CD8-positive, alpha-beta T cell (primary cell): ENCODE measurements at regions of chr21 and their contacts with region 1.

Region 1: GRCh38 chr21:38092051-38092450 is 164.7 kb upstream of the KCNJ15 start:
- DNase-seq: no peak
- ATAC-seq: no peak
- H3K4me3 ChIP-seq: no peak overlapping the region
- H3K4me3 Mint-ChIP-seq: no peak overlapping the region
- H3K27ac ChIP-seq: no peak overlapping the region
- H3K27ac Mint-ChIP-seq: no peak overlapping the region
- H3K4me1 ChIP-seq: no peaks in the 10 kb centered on the region
- H3K4me1 Mint-ChIP-seq: no peaks in the 10 kb centered on the region
- H3K27me3 ChIP-seq: peaks cover 0 to 4% of the 10 kb centered on the region in 2 experiments
- H3K27me3 Mint-ChIP-seq: peaks cover 10% of the 10 kb centered on the region
- CTCF ChIP-seq: no peak

Region 2: DNA sequence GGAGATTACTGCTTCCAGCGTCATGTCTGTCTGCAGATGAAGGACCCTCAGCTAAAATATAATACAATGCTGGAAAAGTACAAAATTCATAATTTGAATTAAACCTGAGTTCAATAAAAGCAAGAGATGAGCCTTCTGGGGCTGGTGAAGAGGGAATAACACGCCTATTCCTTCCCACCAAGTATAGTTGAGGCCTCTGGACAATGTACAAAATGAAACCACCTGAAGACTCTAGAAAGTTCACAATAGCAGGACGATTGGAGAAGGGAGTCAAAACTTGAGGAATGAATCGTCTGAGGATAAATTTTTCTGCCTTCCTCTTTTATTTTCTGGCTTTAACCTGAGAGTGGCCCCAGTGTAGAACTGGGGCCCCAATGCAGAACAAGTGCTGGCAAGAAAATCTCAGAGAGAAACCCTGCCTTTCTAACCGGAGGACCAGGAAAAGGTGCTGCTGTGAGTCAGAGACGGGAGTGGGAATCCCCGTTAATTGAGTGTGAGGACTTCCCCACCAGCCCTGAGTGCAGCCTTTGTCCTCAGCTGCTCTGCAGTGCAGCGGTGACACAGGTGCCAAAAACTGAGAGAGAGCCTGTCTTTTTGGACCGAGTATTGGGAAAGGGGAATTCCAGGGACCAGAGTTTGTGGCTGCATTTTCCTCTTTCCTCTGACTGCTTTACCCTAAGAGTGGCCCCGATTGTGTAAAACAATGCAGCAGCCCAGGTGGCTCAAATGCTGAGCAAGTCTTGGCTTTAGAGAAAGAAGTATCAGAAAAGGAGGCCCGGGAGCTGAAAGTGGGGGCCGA is 460.5 kb before region 1 on chr21:
- CTCF ChIA-PET with region 1: no interaction called
- POLR2A ChIA-PET with region 1: no interaction called
- intact Hi-C with region 1: loop called in 1 of 2 experiments (anchors 5 kb)
- DNase-seq: peak in 1 of 9 experiments; percentile 6
- ATAC-seq: no peak
- H3K4me3 ChIP-seq: no peak overlapping the region
- H3K4me3 Mint-ChIP-seq: no peak overlapping the region
- H3K27ac ChIP-seq: no peak overlapping the region
- H3K27ac Mint-ChIP-seq: no peak overlapping the region
- H3K4me1 ChIP-seq: no peaks in the 10 kb centered on the region
- H3K4me1 Mint-ChIP-seq: no peaks in the 10 kb centered on the region
- H3K27me3 ChIP-seq: no peaks in the 10 kb centered on the region
- H3K27me3 Mint-ChIP-seq: peaks cover 35% of the 10 kb centered on the region
- CTCF ChIP-seq: no peak

Region 3: GRCh38 chr21:38136201-38136600 is 44.1 kb after region 1 on chr21:
- CTCF ChIA-PET with region 1: no interaction called
- POLR2A ChIA-PET with region 1: no interaction called
- intact Hi-C with region 1: no loop called
- DNase-seq: no peak
- ATAC-seq: no peak
- H3K4me3 ChIP-seq: no peak overlapping the region
- H3K4me3 Mint-ChIP-seq: no peak overlapping the region
- H3K27ac ChIP-seq: no peak overlapping the region
- H3K27ac Mint-ChIP-seq: no peak overlapping the region
- H3K4me1 ChIP-seq: no peaks in the 10 kb centered on the region
- H3K4me1 Mint-ChIP-seq: no peaks in the 10 kb centered on the region
- H3K27me3 ChIP-seq: no peaks in the 10 kb centered on the region
- H3K27me3 Mint-ChIP-seq: peaks cover 9% of the 10 kb centered on the region
- CTCF ChIP-seq: no peak